Common myeloid progenitor, CD34-positive (primary cell): ENCODE measurements at regions of chr1 and their contacts with region 1.

Region 1: DNA sequence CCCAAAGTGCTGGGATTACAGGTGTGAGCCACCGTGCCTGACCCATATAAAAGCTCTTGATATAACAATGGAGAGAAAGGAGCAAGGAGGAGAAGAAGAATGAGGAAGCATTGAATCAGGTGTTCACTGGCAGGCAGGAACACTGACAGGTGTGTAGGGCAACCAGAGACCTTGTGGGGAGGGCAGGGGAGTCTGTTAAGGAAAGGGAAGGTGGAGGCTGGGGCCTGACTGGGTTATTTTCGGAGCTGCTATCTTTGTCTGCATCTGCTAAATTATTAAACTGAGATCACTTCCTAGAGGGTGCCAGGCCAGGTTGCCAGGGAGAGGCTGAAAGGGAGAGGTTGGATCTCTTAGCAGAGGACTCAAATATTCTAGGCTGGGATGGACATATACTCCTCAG is 6.8 kb upstream of the TRNP1 start:
- DNase-seq: peak in 2 of 3 donors; percentile 46 to 59
- H3K4me3 ChIP-seq: no peak overlapping the region
- H3K27ac ChIP-seq: no peak overlapping the region
- H3K4me1 ChIP-seq: peaks cover 2 to 19% (median 13%) of the 10 kb centered on the region in 4 experiments
- H3K27me3 ChIP-seq: peaks cover 0 to 14% (median 4%) of the 10 kb centered on the region in 5 experiments

Region 2: GRCh38 chr1:26965213-26965612 is 21.4 kb before region 1 on chr1:
- CTCF ChIA-PET with region 1: interaction called, 36 read pairs
- POLR2A ChIA-PET with region 1: no interaction called
- DNase-seq: no peak
- H3K4me3 ChIP-seq: no peak overlapping the region
- H3K27ac ChIP-seq: no peak overlapping the region
- H3K4me1 ChIP-seq: peaks cover 0 to 5% (median 3%) of the 10 kb centered on the region in 4 experiments
- H3K27me3 ChIP-seq: peaks cover 0 to 20% (median 18%) of the 10 kb centered on the region in 5 experiments

Region 3: GRCh38 chr1:26999440-26999987 is 12.9 kb after region 1 on chr1:
- CTCF ChIA-PET with region 1: interaction called, 36 read pairs
- POLR2A ChIA-PET with region 1: no interaction called
- DNase-seq: no peak
- H3K4me3 ChIP-seq: no peak overlapping the region
- H3K27ac ChIP-seq: no peak overlapping the region
- H3K4me1 ChIP-seq: peaks cover 3 to 36% (median 23%) of the 10 kb centered on the region in 4 experiments
- H3K27me3 ChIP-seq: peaks cover 3 to 23% (median 13%) of the 10 kb centered on the region in 5 experiments

Region 4: DNA sequence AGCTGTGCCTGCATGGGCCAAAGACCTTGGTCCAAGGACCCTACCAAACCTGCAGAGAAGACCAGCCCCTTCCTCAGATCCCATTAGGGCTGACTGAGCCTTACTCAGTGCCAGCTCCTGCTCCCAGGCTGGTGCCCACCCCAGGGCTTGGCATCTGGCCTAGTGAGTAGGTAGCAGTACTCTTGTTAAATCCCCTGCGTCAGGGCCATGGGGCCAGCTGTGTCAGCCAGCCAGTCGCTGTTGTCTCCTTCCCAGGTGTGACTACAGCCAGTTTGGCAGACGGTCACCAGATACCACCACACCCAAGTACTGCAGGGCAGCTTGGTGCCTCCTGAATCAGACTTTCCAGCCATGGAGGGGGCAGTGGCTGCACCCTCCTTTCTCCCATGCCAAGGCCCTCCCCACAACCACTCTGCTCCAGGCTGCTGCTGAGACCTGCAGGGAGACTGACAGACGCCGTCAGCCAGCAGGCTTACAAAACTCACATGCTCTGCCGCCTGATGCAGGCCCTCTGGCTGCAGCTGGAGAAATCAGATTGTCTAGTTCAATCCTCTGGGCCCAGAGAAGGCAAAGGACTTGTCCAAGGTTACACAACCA is 23.0 kb after region 1 on chr1:
- CTCF ChIA-PET with region 1: no interaction called
- POLR2A ChIA-PET with region 1: no interaction called
- DNase-seq: no peak
- H3K4me3 ChIP-seq: no peak overlapping the region
- H3K27ac ChIP-seq: no peak overlapping the region
- H3K4me1 ChIP-seq: peaks cover 0 to 20% (median 10%) of the 10 kb centered on the region in 4 experiments
- H3K27me3 ChIP-seq: peaks cover 0 to 14% (median 4%) of the 10 kb centered on the region in 5 experiments